Posterior cingulate gyrus (tissue), 11 donors: ENCODE measurements at regions of chr1 and their contacts with region 1.

Region 1: GRCh38 chr1:236603991-236604904 is at the start of gene HEATR1:
- DNase-seq: peak; percentile 92 to 99 (median 95)

Region 2: GRCh38 chr1:236659792-236660587 is 55.7 kb after region 1 on chr1:
- intact Hi-C with region 1: no loop called
- DNase-seq: no peak

Region 3: DNA sequence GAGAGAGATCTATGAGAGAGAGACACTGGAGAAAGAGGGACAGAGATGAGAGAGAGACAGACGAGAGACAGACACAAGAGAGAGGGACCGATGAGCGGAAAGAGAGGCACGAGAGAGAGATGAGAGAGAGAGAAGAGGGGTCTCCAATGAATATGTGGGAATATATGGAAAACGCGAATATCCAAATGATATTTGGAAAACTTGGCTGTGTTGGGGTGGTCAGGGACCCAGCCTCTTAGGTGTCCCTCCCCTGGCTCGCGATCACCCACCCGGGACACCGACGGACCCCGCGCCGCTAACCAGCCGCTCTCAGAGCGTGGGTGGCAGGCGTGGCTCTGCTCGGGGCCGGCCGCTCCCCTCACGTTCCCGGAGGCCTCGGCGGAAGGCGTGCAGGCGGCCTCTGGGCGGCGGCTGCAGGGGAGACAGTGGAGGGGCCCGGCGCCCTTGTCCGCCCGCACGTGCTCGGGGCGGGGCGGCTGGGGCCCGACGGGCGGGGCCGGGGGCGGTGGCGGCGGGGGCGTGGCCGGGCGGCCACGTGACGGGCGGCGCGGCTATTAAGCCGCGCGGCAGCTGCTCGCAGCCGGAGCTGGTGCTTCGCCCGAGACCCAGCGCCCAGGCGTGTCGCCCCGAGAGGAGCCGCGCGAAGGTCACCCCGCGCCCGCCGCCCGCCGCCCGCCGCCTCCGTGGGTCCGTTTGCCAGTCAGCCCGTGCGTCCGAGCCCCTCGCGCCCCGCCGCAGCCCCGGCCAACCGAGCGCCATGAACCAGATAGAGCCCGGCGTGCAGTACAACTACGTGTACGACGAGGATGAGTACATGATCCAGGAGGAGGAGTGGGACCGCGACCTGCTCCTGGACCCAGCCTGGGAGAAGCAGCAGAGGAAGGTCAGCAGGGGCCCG is 81.9 kb after region 1 on chr1 and contains the start of gene ACTN2:
- intact Hi-C with region 1: loop called (anchors 5 kb)
- DNase-seq: peak in 9 of 10 donors; percentile 26 to 91 (median 50)

Region 4: GRCh38 chr1:236702791-236703394 is 98.6 kb after region 1 on chr1:
- intact Hi-C with region 1: no loop called
- DNase-seq: no peak

Region 5: GRCh38 chr1:236795035-236795756 is 190.9 kb after region 1 on chr1 and contains the start of gene MTR:
- intact Hi-C with region 1: loop called (anchors 2 kb)
- DNase-seq: peak; percentile 95 to 100 (median 98)

Region 6: GRCh38 chr1:236952246-236953003 is 348.2 kb after region 1 on chr1:
- intact Hi-C with region 1: no loop called
- DNase-seq: no peak

Region 7: DNA sequence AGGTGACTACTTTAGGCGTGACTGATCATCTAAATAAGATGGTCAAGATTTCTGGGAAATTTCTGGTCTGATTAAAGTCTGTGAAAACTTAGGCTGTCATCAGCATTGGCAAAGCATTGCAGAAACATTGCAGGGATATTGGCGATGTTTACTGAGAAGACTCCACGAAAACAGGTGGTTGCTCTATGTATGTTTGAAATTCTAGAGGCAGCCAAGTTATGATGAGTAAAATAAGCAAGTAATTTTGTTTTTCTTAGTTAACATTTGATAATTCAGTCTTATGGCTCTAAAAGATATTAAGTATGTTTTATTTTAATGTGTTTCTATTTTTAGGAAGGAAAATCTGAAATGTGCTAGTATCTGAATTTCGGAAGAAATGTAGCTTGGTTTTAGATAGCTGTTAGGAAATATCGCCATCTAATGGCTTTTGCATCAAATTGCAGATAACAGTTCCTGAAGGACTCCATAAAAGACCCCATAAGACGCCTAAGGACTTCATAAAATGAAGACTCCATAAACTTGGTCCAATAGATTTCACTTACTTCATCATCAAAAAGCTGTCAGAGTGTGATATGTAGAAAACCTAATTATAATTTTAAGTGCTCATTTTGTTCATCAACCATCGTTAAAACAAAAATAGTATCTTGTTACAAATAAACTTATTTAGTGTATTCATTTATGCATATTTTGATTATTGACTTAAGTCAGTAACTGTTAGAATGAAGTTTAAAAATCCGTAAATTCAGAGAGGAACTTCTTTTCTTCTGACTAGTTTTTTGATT is 782.3 kb after region 1 on chr1:
- intact Hi-C with region 1: loop called (anchors 5 kb)
- DNase-seq: no peak

Region 8: GRCh38 chr1:237562242-237562823 is 958.1 kb after region 1 on chr1:
- intact Hi-C with region 1: loop called (anchors 5 kb)
- DNase-seq: no peak